BJ (cell line): ENCODE measurements at regions of chr11 and their contacts with region 1.

Region 1: DNA sequence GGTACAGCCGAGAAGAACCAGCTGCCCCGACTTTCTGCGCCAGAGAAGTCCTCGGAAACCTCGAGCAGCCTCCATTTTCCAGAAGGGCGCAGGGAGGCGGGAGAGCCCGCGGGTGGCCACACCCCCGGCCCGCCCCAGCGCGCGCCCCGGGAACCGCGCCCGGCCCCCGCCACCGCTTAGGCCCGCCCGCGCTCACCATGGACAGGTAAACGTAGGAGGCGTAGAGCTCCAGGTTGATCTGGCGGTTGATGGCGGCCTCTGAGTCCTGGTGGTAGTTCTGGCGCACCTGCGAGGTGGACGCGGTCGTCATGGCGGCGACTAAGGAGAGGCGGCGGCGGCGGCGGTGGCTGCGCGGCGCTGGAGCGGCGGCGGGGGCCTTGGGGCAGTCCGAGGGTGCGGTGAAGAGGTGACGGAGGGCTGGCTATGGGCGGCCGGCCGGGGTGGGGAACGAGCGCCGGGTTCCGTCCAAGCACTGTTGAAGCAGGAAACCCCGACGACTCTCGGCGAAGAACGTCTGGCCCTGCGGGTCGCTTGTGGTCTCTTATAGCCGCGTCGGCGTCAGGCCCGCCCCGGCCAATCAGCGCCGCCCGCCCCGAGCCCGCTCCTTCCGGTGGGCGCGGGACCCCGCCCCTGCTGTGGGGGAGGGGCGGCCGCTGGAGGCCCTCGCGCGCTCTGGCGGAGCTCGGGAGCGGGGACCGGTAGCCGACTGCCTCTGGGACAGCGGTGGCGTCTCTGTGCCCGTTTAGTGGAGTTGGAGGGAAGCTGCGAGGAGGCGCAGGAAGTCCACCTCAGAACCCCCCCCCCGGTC is at the start of gene FTH1:
- DNase-seq: peak; percentile 51
- H3K4me3 ChIP-seq: peak within 1 kb of the TSS; percentile 83
- H3K27me3 ChIP-seq: no peaks in the 10 kb centered on the region
- CTCF ChIP-seq: no peak
- polyA plus RNA-seq, gene FTH1: 1,472 and 1,806 TPM in 2 replicates

Region 2: DNA sequence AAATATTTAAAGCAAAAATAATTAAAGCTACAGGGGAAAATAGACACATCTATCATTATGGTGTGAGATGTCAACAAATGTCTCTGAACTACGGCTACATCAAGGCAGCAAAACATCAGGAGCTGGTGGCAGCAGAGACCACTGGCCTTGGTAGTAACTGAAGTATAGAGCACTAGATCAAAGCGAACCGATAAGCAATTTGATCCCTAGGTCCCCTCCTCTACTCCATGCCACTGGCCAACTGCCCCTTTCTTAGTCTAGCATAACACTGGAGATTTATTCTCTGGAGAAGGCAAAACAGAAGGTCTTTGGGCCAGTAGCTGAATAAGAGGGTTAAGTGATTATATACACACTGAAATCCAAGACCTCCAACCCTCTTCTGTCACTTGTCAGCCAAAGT is 36.4 kb before region 1 on chr11:
- CTCF ChIA-PET with region 1: no interaction called
- POLR2A ChIA-PET with region 1: no interaction called
- DNase-seq: no peak
- H3K4me3 ChIP-seq: no peak overlapping the region
- H3K27me3 ChIP-seq: no peaks in the 10 kb centered on the region
- CTCF ChIP-seq: no peak

Region 3: DNA sequence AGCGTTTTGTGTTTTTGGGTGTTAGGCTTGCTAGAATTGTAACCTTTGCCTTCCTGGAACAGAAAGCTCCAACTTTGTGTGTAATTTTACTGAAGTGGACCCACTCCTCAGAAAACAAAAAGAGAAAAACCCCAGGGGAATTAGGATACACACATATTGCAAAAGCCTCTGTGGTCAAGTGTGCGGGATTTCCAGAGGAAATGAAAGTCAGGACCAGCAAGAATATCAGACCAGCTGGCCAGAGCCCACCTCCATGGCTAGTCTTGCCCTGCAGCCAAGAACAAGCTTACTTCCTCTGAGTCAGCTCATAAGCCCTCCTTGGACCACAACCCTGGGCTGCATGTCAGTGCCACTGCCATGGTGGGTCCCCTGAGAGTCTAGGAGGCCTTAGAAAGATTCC is 37.2 kb after region 1 on chr11:
- CTCF ChIA-PET with region 1: no interaction called
- POLR2A ChIA-PET with region 1: interaction called, 10 read pairs
- DNase-seq: no peak
- H3K4me3 ChIP-seq: no peak overlapping the region
- H3K27me3 ChIP-seq: no peaks in the 10 kb centered on the region
- CTCF ChIP-seq: no peak

Region 4: DNA sequence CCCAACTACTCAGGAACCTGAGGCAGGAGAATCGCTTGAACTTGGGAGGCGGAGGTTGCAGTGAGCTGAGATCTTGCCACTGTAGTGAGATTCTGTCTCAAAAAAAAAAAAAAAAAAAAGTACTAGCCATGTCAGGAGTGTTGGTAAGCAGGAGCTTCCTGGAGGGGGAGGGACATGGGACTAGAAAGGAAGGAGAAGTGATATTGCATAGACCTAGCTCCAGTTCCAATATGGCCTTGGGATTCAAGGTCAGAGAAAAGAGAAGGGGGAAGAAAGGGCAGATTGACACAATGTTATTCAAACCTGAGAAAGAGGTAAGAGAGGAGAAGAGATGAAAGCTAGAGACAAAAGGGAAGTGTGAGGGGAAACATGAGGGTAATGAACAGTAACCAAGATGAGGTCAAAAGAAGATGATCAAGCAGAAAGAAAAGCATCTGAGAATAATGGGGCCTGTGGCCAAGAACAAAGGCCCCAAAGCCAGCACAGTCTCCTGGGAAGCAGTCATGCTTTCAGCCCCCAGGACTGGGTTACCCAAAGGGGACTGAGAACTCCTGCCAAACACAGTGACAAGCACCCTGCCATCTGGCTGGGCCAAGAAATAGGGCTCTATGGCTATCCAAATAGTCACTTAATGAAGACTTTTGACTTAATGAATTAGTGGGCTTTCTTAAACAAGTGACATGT is 51.8 kb after region 1 on chr11:
- CTCF ChIA-PET with region 1: no interaction called
- POLR2A ChIA-PET with region 1: no interaction called
- DNase-seq: no peak
- H3K4me3 ChIP-seq: no peak overlapping the region
- H3K27me3 ChIP-seq: no peaks in the 10 kb centered on the region
- CTCF ChIP-seq: no peak

Region 5: GRCh38 chr11:62855571-62856332 is 888.4 kb after region 1 on chr11:
- CTCF ChIA-PET with region 1: no interaction called
- POLR2A ChIA-PET with region 1: interaction called, 10 read pairs
- DNase-seq: peak; percentile 86
- H3K4me3 ChIP-seq: peak overlapping the region; percentile 67
- H3K27me3 ChIP-seq: no peaks in the 10 kb centered on the region
- CTCF ChIP-seq: no peak